ENCODE measurements at regions of chr3 and their contacts with region 1.

Region 1: GRCh38 chr3:168249550-168250414 is 154.1 kb upstream of the GOLIM4 start:
- DNase-seq: peak; percentile 55 to 87
- H3K4me3 ChIP-seq: peak overlapping the region; percentile 66
- H3K27ac ChIP-seq: no peak overlapping the region
- H3K4me1 ChIP-seq: no peaks in the 10 kb centered on the region
- H3K27me3 ChIP-seq: no peaks in the 10 kb centered on the region
- CTCF ChIP-seq: peak; percentile 62

Region 2: GRCh38 chr3:168417016-168417415 is 167.2 kb after region 1 on chr3:
- CTCF ChIA-PET with region 1: no interaction called
- POLR2A ChIA-PET with region 1: no interaction called
- intact Hi-C with region 1: loop called (anchors 1 kb)
- DNase-seq: peak; percentile 71 to 91
- H3K4me3 ChIP-seq: peak overlapping the region; percentile 33; the same call in 1 of the 2 replicates
- H3K27ac ChIP-seq: peak overlapping the region; percentile 49
- H3K4me1 ChIP-seq: peaks cover 43% of the 10 kb centered on the region
- H3K27me3 ChIP-seq: no peaks in the 10 kb centered on the region
- CTCF ChIP-seq: no peak

Region 3: DNA sequence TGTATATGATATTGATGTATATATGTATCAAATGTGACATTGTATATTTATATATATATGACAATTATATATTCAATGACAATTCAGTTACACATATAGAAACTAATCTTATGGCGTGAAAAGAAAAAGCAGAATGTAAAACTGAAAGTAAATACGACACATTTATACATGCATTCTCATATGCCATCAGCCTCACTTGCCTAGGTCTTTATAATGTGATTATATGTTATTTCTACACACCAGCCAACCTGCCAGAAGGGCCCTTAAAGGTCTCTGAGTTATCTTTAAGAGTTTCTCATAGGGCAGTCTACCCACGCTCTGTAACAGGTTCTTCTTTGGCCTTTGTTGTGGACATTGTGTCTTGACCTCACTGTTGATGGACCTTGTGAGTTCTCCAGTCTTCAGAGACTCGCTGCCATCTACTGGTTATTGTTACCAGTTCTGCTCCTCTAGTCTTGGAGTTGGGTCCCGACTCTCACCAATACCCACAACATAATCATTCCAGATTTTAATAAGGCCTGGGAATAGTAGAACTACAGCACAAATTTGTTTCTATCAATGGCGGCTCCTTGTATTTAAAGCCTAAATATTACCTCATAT is 217.4 kb after region 1 on chr3:
- CTCF ChIA-PET with region 1: no interaction called
- POLR2A ChIA-PET with region 1: no interaction called
- intact Hi-C with region 1: loop called (anchors 1 kb)
- DNase-seq: peak in 1 of 2 experiments; percentile 34
- H3K4me3 ChIP-seq: no peak overlapping the region
- H3K27ac ChIP-seq: no peak overlapping the region
- H3K4me1 ChIP-seq: no peaks in the 10 kb centered on the region
- H3K27me3 ChIP-seq: no peaks in the 10 kb centered on the region
- CTCF ChIP-seq: peak; percentile 47